ENCODE measurements at regions of chr19 and their contacts with region 1.

Region 1: GRCh38 chr19:47256688-47257443 is 541 bp downstream of the CCDC9 start:
- DNase-seq: peak; percentile 100
- ATAC-seq: peak; percentile 83 to 91 (median 88)
- H3K4me3 ChIP-seq: peak overlapping the region; percentile 49 to 81 (median 62)
- H3K27ac ChIP-seq: peak overlapping the region; percentile 80 to 97 (median 94)
- H3K4me1 ChIP-seq: peaks cover 6 to 42% (median 28%) of the 10 kb centered on the region in 9 donors
- H3K27me3 ChIP-seq: no peaks in the 10 kb centered on the region
- CTCF ChIP-seq: no peak

Region 2: DNA sequence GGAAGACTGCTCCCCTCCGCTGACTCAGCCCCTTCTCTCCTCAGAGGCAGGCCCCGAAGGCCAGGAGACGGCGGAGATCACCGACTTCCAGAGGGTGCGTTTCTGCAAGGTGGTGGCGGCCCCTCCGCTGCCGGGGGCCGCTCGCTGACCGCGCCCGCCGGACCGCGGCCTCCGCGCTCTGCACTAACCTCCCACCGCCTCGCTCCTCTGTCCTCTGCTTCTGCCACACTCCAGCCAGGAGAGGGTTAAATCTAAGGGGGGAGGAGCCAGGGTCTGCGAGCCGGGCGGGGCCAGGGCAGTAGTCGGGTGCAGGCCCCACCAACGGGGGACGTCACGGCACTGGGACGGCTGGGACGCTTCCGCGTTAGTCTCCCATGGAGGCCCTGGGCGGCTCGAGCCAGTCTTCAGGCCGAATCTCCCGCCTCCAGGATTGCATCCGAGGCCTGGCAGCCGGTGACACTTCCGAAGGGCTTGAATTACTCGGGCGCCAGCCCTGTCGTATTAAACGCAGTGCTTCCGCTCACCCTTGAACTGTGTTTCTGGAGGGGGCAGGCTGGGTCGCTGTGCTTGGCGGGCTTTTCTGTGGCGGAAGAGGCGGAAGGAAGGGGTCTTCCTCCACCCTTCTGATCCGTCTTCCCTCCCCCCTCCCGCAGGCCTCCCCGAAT is 16.6 kb after region 1 on chr19:
- intact Hi-C with region 1: loop called in 5 of 10 experiments (anchors 1 kb)
- DNase-seq: peak; percentile 91 to 93
- ATAC-seq: peak; percentile 74 to 88 (median 82)
- H3K4me3 ChIP-seq: peak overlapping the region; percentile 57 to 84 (median 72)
- H3K27ac ChIP-seq: peak overlapping the region; percentile 81 to 99 (median 98)
- H3K4me1 ChIP-seq: peaks cover 11 to 54% (median 42%) of the 10 kb centered on the region in 9 donors
- H3K27me3 ChIP-seq: no peaks in the 10 kb centered on the region
- CTCF ChIP-seq: no peak

Region 3: DNA sequence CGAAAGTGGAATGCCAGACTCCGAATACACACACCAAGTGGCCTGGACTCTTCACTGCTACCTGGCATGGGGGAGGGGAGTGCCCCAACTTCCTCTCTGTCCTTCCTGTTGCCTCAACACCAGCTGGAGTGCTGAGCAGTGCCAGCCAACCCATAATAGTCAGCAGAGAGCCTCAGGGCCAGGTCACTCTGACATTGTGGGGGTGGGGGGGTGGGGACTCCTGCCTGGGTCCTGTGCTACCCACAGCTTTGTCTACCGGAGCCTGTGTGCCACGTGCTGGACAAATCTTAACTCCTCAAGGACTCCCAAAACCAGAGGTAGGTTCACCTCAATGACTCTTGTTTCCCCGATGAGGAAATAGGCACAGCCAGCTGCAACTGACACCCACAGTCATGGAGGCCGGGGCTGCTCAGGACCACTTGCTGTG is 80.0 kb after region 1 on chr19:
- intact Hi-C with region 1: no loop called
- DNase-seq: peak; percentile 38 to 45
- ATAC-seq: peak; percentile 65 to 82 (median 70)
- H3K4me3 ChIP-seq: peak overlapping the region in 5 of 10 donors; percentile 8 to 52 (median 15)
- H3K27ac ChIP-seq: peak overlapping the region in 4 of 10 donors; percentile 4 to 90 (median 34)
- H3K4me1 ChIP-seq: peaks cover 0 to 30% (median 0%) of the 10 kb centered on the region in 9 donors
- H3K27me3 ChIP-seq: peaks cover 0 to 4% (median 0%) of the 10 kb centered on the region in 7 donors
- CTCF ChIP-seq: no peak

Region 4: DNA sequence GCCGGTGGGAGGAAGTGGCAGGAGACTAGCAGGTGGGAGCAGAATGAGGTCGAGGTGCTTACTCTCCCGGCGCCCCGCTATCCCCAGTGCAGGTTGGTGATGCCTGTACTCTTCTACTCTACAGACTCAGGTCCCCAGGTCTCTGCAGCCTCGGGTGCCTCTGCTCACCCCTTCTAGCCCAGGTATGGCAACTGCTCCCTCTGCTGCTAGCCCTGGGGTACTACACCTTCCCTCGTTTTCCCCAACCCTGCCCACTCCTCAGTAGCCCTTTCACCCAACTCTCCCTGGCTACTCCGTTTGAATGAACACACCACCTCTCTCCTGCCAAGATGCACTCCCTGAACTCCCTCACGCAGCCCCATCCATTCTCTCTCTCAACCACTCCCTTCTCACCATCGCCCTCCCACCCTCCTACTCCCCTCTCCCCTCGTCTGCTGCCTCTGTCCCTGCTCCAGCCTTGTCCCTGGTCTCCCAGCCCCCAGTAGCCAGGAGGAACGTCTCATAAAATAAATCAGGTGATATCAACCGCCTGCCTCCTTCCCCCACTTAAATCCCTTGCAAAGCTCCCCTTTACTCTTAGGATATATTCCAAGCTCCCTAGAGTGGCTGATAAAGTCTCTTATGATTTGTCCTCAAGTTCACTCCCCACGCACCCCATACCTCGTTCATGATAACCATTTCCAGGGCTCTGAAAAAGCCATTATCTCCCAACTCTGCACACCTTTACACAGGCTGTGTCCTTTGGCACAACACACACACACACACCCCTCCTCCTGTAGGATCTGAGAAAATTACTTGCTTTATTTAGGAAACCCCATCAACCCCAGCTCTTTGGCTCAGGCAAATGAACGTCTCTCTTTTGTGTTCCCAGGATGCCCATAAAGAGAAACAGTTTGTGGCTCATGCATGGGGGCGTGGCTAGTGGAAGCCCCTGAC is 170.6 kb after region 1 on chr19:
- intact Hi-C with region 1: no loop called
- DNase-seq: peak; percentile 39 to 47
- ATAC-seq: peak; percentile 25 to 80 (median 60)
- H3K4me3 ChIP-seq: no peak overlapping the region
- H3K27ac ChIP-seq: no peak overlapping the region
- H3K4me1 ChIP-seq: peaks cover 7 to 27% (median 21%) of the 10 kb centered on the region in 9 donors
- H3K27me3 ChIP-seq: peaks cover 9 to 98% (median 75%) of the 10 kb centered on the region in 7 donors
- CTCF ChIP-seq: peak; percentile 63 to 90 (median 82)

Measured in heart right ventricle (tissue), 16 donors.